Psoas muscle (tissue), 8 donors: ENCODE measurements at regions of chr1 and their contacts with region 1.

Region 1: DNA sequence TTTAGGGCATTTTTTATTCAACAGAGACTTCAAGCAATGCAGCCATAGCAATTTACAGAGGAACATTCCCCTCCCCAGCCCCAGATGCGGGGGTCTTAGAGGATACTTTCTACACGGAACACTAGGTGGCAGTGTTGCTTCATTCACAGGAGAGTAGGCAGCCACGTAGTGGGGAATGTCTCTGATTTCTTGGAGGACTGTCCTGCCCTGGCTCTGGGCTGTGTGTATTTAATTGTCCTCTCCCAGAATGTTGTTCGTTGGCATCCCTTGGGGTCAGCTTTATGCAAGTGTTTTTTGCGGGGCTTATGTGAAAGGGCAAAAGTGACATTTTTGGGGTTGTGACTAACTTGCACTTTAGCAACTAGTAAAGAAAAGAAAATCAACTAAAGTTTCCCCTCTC is 96.9 kb downstream of the PAPPA2 start:
- DNase-seq: peak in 1 of 2 donors; percentile 27
- ATAC-seq: peak; percentile 89 to 95 (median 94)
- H3K4me3 ChIP-seq: no peak overlapping the region
- H3K27ac ChIP-seq: no peak overlapping the region
- H3K4me1 ChIP-seq: no peaks in the 10 kb centered on the region
- H3K27me3 ChIP-seq: peaks cover 0 to 8% (median 0%) of the 10 kb centered on the region in 3 donors
- CTCF ChIP-seq: peak; percentile 93

Region 2: GRCh38 chr1:176243746-176244145 is 316.1 kb before region 1 on chr1:
- intact Hi-C with region 1: no loop called
- DNase-seq: no peak
- ATAC-seq: no peak
- H3K4me3 ChIP-seq: no peak overlapping the region
- H3K27ac ChIP-seq: no peak overlapping the region
- H3K4me1 ChIP-seq: no peaks in the 10 kb centered on the region
- H3K27me3 ChIP-seq: peaks cover 0 to 4% (median 0%) of the 10 kb centered on the region in 3 donors
- CTCF ChIP-seq: no peak

Region 3: DNA sequence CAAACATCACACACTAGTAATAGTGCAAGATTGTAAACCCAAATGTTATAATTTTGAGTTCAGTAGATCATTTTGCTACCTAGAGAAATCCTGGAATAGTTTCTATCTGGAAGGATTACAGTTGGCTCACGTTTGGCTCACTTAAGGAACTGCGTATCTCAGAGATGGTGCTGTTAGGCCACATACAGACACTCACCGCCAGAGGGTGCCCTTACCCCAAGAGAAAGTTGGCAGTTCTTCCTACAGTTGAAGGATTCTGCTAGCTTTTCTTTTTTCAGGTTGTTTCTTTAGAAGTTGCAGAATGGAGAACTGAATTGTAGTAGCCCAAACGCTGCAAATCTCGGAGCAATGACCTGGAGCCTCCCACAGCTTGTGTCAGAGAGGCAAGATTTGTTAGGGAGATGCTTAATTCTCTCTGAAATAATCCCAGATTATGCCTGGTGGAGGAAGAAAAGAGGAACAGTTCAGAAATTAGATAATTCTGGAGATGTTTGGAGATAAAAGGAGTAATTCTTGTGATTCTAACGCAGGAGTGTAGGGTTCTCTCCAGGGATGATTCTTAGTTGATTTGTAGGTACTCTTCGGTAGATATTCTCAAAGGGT is 184.8 kb before region 1 on chr1:
- intact Hi-C with region 1: loop called in 1 of 2 experiments (anchors 5 kb)
- DNase-seq: peak; percentile 66 to 76
- ATAC-seq: peak; percentile 56 to 77 (median 72)
- H3K4me3 ChIP-seq: no peak overlapping the region
- H3K27ac ChIP-seq: no peak overlapping the region
- H3K4me1 ChIP-seq: no peaks in the 10 kb centered on the region
- H3K27me3 ChIP-seq: no peaks in the 10 kb centered on the region
- CTCF ChIP-seq: peak; percentile 79

Region 4: DNA sequence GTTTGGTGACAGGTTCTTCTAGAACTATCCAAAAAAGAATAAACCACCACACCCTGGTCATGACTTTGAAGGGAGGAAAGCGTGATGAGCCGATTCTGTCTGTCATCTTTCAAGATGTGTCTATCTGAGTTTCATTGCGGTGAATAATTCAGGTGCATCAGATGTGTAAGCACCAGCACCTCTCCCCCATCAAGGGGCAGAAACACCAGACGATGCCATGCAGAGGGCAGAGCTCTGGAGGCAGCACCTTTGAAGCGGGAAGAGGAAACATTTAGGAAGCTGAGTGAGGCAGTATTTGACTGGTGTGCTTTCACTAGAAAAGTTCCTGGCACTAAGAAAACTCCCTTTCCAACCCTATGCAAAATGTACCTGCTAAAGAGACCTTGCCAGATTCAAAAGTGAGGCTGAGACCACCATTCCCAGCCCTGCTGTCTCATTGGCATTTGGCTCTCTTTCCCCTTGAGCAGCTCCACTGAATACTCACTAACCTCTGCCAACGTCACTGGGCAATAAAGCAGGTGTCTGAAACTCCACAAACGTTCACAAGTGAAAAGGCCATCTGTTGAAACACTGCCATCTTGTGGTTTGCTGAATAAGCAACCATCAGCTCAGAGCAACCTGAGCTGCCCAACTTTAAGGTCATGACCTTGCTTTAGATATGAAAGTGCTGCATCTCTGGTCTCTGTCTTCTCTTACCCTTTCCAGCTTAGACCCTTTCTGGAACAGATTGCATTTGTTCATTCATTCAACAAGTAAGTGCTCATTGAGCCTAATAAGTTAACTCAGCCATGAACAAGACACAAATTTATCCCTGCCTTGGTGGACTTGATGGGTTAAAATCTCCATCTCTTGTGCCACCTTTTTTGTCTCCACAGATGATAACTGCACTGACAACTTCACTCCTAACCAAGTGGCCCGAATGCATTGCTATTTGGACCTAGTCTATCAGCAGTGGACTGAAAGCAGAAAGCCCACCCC is 131.7 kb after region 1 on chr1:
- intact Hi-C with region 1: loop called (anchors 2 to 5 kb)
- DNase-seq: no peak
- ATAC-seq: peak; percentile 67 to 82 (median 76)
- H3K4me3 ChIP-seq: no peak overlapping the region
- H3K27ac ChIP-seq: peak overlapping the region; percentile 81
- H3K4me1 ChIP-seq: peaks cover 44% of the 10 kb centered on the region
- H3K27me3 ChIP-seq: no peaks in the 10 kb centered on the region
- CTCF ChIP-seq: peak; percentile 65

Region 5: GRCh38 chr1:176745945-176746344 is 186.1 kb after region 1 on chr1:
- intact Hi-C with region 1: loop called in 1 of 2 experiments (anchors 10 kb)
- DNase-seq: no peak
- ATAC-seq: peak; percentile 44 to 70 (median 50)
- H3K4me3 ChIP-seq: no peak overlapping the region
- H3K27ac ChIP-seq: no peak overlapping the region
- H3K4me1 ChIP-seq: no peaks in the 10 kb centered on the region
- H3K27me3 ChIP-seq: no peaks in the 10 kb centered on the region
- CTCF ChIP-seq: no peak

Region 6: GRCh38 chr1:176843352-176844297 is 283.7 kb after region 1 on chr1:
- intact Hi-C with region 1: loop called (anchors 1 to 5 kb)
- DNase-seq: peak in 1 of 2 donors; percentile 13
- ATAC-seq: peak; percentile 52 to 71 (median 59)
- H3K4me3 ChIP-seq: no peak overlapping the region
- H3K27ac ChIP-seq: no peak overlapping the region
- H3K4me1 ChIP-seq: no peaks in the 10 kb centered on the region
- H3K27me3 ChIP-seq: no peaks in the 10 kb centered on the region
- CTCF ChIP-seq: peak; percentile 72

Region 7: DNA sequence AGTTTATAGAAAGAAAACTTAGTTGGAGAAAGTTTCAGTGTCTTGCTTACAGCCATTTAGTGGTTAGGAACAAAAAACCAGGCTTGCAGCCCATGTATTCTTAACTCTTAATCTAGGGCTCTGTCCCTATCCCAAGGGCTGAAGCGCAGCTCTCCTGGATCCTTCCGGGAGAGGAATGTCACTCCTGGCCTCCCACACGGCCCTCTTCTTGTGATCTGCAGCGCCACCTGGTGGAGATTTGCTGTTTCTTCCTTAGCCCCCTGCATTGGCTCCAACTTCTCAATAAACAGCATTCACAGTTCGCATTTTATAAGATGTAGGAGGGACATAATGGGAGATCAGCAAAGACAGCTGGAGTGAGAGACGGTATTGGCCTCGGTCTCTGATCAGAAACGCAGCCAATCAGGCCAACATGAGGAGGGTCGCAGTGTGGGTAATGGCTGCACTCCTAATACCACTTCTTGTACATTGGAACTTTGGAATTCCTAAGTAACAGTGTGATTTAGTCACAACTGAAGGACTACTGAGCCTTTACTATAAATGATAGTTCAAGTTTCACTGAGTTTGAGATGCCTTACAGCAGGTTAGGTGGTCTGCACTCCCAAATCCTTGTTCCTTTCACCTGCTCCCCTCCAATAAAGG is 321.2 kb after region 1 on chr1:
- intact Hi-C with region 1: loop called (anchors 1 to 2 kb)
- DNase-seq: peak; percentile 65 to 82
- ATAC-seq: peak; percentile 82 to 91 (median 88)
- H3K4me3 ChIP-seq: no peak overlapping the region
- H3K27ac ChIP-seq: no peak overlapping the region
- H3K4me1 ChIP-seq: no peaks in the 10 kb centered on the region
- H3K27me3 ChIP-seq: no peaks in the 10 kb centered on the region
- CTCF ChIP-seq: peak; percentile 89